Activated CD4-positive, alpha-beta memory T cell treated with anti-CD3 and anti-CD28 coated beads, Interleukin-2, amount 10 ng/mL, durations not matched to agents 7 days and 5 days (primary cell): ENCODE measurements at regions of chr16 and their contacts with region 1.

Region 1: DNA sequence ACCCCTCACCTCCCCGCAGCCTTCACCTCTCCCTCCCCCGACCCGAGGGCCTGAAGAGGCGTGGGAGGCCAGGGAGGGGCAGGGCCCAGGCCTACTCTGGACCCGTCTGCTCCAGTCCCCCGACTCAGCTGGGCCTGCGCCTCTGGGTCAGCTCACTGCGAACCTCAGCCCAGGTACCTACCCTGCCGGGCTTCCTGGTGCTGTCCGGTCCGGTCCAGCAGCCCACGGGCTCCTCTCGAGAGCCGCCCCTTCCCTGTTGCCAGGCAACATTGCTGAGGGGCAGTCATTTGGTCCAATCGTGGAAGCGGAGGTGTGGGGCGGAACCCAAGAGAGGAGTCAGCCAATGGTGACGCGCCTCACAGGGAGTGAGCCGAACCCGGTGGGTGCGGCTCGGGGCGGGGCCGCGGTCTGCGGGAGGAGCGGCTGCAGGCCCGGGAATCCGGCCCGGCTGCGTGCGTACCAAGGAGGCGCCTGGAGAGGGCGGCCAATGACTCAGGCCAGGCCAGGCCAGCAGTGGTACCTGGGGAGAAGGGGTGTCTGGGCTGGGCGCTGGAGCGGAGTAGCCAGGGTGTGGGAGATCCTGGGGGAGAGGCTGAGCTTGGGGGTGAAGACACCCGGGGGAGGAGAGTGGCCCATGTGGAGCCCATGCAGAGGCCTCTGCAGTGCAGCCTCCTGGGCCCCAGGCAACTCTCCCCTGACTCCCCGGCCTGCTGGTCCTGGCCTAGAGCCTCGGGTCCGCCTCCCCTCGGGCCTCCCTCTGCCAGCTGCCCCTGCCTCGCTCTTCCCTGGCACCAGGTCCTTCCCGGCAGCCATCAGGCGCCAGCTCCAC is at the start of gene MEAK7:
- DNase-seq: peak; percentile 98
- H3K4me3 Mint-ChIP-seq: peak within 1 kb of the TSS; percentile 86
- H3K27ac Mint-ChIP-seq: peak within 1 kb of the TSS; percentile 98
- H3K4me1 Mint-ChIP-seq: peaks cover 64% of the 10 kb centered on the region
- H3K27me3 Mint-ChIP-seq: peaks cover 2% of the 10 kb centered on the region
- total RNA-seq, gene MEAK7: 27.7 to 33.4 TPM

Region 2: GRCh38 chr16:84518748-84519341 is 14.2 kb after region 1 on chr16:
- CTCF ChIA-PET with region 1: interaction called, 26 read pairs
- POLR2A ChIA-PET with region 1: interaction called, 42 read pairs
- DNase-seq: peak; percentile 89
- H3K4me3 Mint-ChIP-seq: peak overlapping the region; percentile 37
- H3K27ac Mint-ChIP-seq: peak overlapping the region; percentile 82
- H3K4me1 Mint-ChIP-seq: peaks cover 67% of the 10 kb centered on the region
- H3K27me3 Mint-ChIP-seq: no peaks in the 10 kb centered on the region

Region 3: DNA sequence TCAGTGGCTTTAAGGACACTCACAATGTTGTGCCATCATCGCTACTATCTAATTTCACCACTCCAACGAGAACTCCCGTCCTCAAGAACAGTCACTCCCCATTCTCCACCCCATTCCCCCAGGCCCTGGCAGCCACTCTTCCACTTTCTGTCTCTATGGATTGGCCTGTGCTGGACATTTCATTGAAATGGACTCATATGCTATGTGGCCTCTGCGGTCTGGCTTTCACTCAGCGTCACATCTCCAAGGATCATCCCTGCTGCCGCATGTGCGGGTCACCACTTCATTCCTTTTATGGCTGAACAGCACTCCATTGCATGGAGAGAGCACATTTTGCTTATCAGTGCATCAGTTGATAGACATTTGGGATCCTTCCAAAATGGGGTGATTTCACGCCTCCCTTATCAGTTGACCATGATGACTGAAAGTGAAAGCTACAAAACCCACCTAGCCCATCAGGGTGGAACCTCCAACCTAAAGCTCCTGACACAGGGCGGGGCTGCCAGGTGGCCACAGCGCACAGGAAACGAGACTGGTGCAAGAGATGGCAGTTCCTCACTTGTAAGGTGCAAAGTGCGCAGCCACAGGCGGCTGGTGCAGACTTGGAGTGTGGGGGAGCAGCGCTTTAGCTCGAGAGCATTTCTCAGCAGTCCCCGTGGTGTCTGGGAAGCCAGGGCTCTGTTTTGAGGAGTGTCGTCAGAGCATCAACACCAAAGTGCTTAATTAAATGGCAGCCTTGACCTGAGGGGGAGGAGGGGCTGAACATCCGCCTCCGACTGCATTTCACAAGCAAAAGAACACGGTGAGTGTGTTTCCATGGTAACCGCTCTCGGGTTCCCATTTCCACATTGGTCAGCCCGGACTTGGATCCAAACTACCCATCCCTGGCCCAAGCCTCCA is 89.4 kb after region 1 on chr16:
- CTCF ChIA-PET with region 1: interaction called, 6 read pairs
- POLR2A ChIA-PET with region 1: interaction called, 120 read pairs
- DNase-seq: peak; percentile 91
- H3K4me3 Mint-ChIP-seq: peak overlapping the region; percentile 81
- H3K27ac Mint-ChIP-seq: peak overlapping the region; percentile 96
- H3K4me1 Mint-ChIP-seq: peaks cover 82% of the 10 kb centered on the region
- H3K27me3 Mint-ChIP-seq: no peaks in the 10 kb centered on the region

Region 4: GRCh38 chr16:84607694-84608093 is 103.1 kb after region 1 on chr16:
- CTCF ChIA-PET with region 1: interaction called, 7 read pairs
- POLR2A ChIA-PET with region 1: interaction called, 120 read pairs
- DNase-seq: peak; percentile 51
- H3K4me3 Mint-ChIP-seq: peak overlapping the region; percentile 70
- H3K27ac Mint-ChIP-seq: peak overlapping the region; percentile 92
- H3K4me1 Mint-ChIP-seq: peaks cover 94% of the 10 kb centered on the region
- H3K27me3 Mint-ChIP-seq: no peaks in the 10 kb centered on the region

Region 5: GRCh38 chr16:84628226-84628731 is 123.6 kb after region 1 on chr16:
- CTCF ChIA-PET with region 1: interaction called, 62 read pairs
- POLR2A ChIA-PET with region 1: interaction called, 3 read pairs
- DNase-seq: no peak
- H3K4me3 Mint-ChIP-seq: no peak overlapping the region
- H3K27ac Mint-ChIP-seq: no peak overlapping the region
- H3K4me1 Mint-ChIP-seq: peaks cover 24% of the 10 kb centered on the region
- H3K27me3 Mint-ChIP-seq: peaks cover 43% of the 10 kb centered on the region